A673 (cell line): ENCODE measurements at regions of chr6 and their contacts with region 1.

Region 1: DNA sequence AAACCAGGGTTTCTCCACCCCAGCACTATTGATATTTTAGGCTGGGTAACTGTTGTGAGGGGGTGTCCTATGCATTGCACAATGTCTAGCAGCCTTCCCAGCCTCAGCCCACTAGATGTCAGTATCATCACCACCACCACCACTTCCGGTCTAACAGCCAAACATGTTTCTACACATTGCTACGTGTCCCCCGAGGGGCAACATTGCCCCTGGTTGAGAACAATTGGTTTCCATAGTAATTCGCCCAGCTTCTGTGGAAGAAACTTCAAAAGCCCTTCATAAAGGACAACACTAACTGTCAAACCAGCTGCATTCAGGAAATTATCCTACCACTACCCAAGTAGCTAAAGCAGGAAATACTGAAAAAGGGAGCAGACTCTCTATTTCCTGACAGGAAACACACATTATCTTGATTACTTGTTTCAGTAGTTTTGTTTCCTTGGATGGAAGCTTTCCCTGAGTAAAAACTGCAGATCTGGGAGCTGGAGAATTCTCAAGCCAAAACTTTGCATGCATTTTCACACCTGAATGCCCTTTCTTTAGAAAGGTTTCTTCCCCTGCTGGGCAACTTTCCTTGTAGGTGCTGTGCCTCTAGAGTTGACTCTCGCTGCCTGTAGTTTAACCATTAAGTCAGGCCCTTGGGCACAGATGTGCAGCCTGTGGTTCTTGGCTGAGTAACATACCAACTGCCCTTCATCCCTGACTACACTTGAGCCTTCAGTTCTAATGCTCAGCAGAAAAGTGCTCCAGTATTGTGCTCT is 23.6 kb downstream of the PKHD1 start:
- DNase-seq: peak; percentile 99
- H3K4me3 ChIP-seq: no peak overlapping the region
- H3K27ac ChIP-seq: peak overlapping the region; percentile 90
- H3K4me1 ChIP-seq: peaks cover 45% of the 10 kb centered on the region
- H3K27me3 ChIP-seq: no peaks in the 10 kb centered on the region
- CTCF ChIP-seq: peak; percentile 88

Region 2: DNA sequence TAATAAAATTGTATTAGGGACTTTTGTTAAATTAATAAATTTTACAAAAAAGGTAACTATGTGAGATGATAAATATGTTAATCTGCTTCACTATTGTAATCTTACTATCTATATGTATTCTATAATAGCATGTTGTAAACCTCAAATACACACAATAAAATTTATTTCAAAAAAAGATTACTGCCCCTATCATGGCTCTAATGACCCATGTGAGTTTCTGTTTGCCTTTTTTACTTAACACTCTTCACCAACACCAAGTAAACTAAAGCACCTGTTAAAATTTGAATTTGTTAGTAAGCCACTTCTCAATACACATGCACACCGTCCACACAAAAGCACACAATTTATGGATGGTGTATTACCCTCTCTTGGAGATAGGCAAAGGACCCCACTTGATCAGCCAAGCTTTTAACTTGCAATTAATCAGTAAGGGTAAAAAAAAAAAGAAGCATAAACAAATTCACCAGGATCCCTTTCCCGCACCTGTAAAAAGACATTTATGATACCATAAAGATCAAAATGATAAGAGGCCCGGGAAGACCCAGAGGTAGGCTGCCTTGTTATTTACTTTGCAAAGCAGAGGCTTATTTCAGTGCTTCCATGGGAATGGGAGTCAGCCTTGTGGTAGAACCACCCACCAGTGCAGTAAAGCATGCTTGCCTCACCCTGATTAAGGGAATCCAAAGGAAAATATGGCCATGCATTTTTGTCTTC is 52.3 kb after region 1 on chr6:
- CTCF ChIA-PET with region 1: no interaction called
- POLR2A ChIA-PET with region 1: interaction called, 12 read pairs
- intact Hi-C with region 1: loop called (anchors 1 kb)
- DNase-seq: peak; percentile 25
- H3K4me3 ChIP-seq: no peak overlapping the region
- H3K27ac ChIP-seq: peak overlapping the region; percentile 65
- H3K4me1 ChIP-seq: peaks cover 25% of the 10 kb centered on the region
- H3K27me3 ChIP-seq: no peaks in the 10 kb centered on the region
- CTCF ChIP-seq: no peak

Region 3: DNA sequence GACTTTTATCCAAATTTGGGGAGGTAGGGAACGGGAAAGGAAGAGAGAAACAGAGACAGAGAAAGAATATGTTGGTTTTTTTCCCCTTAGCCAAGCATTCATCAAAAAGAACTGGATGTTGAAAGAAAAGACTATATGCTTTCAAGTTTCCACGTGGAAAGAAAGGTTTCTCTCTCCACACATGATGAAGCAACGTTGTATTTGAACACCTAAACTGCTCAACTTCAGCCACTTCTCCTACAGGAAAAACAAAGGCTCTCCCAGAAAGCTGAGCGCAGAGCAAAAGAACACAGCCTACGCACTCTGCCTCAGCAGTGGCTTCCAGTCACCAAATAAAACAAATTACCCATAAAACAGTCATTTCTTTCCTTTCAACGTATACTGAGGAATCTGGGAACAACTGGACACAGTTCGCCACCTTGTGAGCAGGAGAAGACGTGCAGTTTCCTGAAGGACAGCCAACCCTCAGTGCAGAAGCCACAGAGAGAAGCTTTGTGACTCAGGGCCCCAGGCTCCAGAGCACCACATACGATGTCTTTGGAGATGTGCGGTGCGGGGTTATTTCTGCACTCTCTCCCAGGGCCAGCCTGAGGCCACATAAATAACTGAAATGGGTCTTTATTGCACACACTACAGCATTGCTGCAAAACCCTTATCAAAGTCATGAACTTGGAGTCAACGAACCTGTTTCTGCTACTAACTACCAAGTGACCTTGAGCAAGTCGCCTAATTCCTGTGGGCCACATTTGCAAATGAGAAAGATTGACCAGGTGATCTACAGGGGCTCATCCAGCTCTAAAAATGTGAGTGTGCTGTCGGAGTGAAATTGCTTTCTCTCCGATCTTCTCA is 170.4 kb after region 1 on chr6:
- CTCF ChIA-PET with region 1: interaction called, 3 read pairs
- POLR2A ChIA-PET with region 1: no interaction called
- intact Hi-C with region 1: loop called (anchors 1 kb)
- DNase-seq: peak; percentile 91
- H3K4me3 ChIP-seq: no peak overlapping the region
- H3K27ac ChIP-seq: peak overlapping the region; percentile 1
- H3K4me1 ChIP-seq: peaks cover 16% of the 10 kb centered on the region
- H3K27me3 ChIP-seq: no peaks in the 10 kb centered on the region
- CTCF ChIP-seq: peak; percentile 81

Region 4: DNA sequence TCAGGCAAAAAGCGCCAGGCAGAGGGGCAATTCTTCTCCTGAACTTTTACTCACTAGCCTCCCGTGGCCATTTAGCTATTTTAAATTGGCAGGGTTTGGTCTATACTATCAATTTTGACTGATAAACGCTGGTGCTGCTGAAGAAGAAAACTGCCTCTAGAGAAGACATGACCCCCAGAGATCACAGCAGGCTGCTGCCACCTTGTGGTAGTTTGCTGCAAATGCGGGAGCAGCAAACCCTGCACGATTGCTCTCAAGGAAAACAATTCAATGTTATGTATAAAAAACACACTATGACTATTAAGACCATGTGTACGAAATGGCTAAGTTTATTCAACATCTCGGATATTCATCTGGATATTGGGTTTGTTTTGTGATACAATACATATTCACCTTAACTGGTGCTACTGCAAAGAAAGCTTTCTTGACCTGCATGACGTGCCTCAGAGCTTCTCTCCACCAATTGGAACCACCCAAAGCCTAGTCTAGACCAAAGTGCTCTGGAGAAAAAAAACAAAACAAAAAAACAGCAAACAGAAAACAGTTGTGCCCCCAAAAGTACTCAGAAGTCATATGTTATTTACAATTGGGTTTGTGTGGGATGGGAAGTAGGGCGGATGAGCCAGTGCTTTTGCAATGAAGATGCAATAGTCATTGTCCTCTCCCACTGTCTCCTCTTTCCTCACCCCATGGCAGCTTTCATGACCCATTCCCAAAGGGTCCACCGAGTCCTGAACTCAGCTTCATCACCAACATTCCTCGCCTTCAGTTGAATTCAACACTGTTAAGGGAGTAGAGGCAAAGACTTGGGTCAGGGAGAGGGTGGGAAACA is 200.2 kb after region 1 on chr6:
- CTCF ChIA-PET with region 1: interaction called, 3 read pairs
- POLR2A ChIA-PET with region 1: no interaction called
- intact Hi-C with region 1: loop called (anchors 5 kb)
- DNase-seq: peak; percentile 79
- H3K4me3 ChIP-seq: no peak overlapping the region
- H3K27ac ChIP-seq: no peak overlapping the region
- H3K4me1 ChIP-seq: no peaks in the 10 kb centered on the region
- H3K27me3 ChIP-seq: no peaks in the 10 kb centered on the region
- CTCF ChIP-seq: peak; percentile 98